ENCODE measurements at regions of chr20 and their contacts with region 1.

Region 1: DNA sequence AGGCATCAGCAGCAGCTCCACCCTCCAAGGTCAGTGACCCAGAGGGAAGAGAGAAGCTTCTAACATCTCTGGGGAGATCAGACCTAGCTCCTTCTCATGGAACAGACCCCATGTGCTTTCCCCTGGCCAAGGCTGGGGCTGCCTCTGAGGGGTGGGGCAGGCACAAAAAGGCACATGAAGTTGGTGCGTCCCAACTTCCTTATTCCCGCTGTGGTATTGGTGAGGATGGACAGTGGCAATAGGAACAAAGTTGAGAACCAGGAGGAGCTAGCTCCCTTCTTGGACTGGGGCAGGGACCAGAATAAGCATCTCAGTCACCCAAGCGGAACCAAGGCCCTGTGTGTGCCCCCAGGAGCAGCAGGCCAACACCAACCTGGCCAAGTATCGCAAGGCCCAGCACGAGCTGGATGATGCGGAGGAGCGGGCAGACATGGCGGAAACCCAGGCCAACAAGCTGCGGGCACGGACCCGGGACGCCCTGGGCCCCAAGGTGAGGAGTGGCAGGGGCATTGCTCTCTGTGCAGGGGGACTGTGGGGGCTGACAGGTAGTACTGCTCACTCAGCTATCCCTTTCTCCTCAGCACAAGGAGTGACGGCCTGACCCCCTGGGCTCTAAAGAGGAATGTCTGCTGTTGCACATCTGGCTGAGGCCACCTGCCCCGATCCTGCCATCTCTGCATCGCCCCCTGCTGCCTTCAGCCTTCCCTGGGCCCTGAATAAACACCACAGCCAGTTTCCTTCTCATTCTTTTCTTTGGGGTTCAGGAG is 46.1 kb downstream of the MYH7B start:
- DNase-seq: no peak
- ATAC-seq: peak; percentile 40; the same call in 1 of the 3 replicates
- H3K4me3 ChIP-seq: no peak overlapping the region
- H3K27ac ChIP-seq: no peak overlapping the region
- H3K4me1 ChIP-seq: peaks cover 0 to 19% of the 10 kb centered on the region in 2 experiments; a peak in 2 of 5 replicates
- H3K27me3 ChIP-seq: no peaks in the 10 kb centered on the region
- CTCF ChIP-seq: peak; percentile 28 to 60 (median 53); a peak in 5 of 6 replicates
- EP300 ChIP-seq: no peak
- POLR2A ChIP-seq: no peak
- RAD21 ChIP-seq: peak in 1 of 2 experiments; percentile 33; a peak in 2 of 4 replicates

Region 2: GRCh38 chr20:34989670-34990069 is 12.1 kb before region 1 on chr20:
- CTCF ChIA-PET with region 1: no interaction called
- POLR2A ChIA-PET with region 1: interaction called, 17 read pairs
- in situ Hi-C with region 1: no loop called
- intact Hi-C with region 1: no loop called
- DNase-seq: no peak
- ATAC-seq: no peak
- H3K4me3 ChIP-seq: no peak overlapping the region
- H3K27ac ChIP-seq: no peak overlapping the region
- H3K4me1 ChIP-seq: peaks cover 0 to 37% of the 10 kb centered on the region in 2 experiments; a peak in 3 of 5 replicates
- H3K27me3 ChIP-seq: no peaks in the 10 kb centered on the region
- CTCF ChIP-seq: no peak
- EP300 ChIP-seq: no peak
- POLR2A ChIP-seq: no peak
- RAD21 ChIP-seq: no peak